ENCODE measurements at regions of chr10 and their contacts with region 1.

Region 1: GRCh38 chr10:17062955-17063484 is 66.6 kb downstream of the CUBN start:
- DNase-seq: peak; percentile 94
- H3K4me3 ChIP-seq: peak overlapping the region in 2 of 3 experiments; percentile 10 to 24
- H3K27ac ChIP-seq: peak overlapping the region; percentile 99
- H3K4me1 ChIP-seq: peaks cover 43% of the 10 kb centered on the region
- H3K27me3 ChIP-seq: no peaks in the 10 kb centered on the region
- CTCF ChIP-seq: no peak

Region 2: DNA sequence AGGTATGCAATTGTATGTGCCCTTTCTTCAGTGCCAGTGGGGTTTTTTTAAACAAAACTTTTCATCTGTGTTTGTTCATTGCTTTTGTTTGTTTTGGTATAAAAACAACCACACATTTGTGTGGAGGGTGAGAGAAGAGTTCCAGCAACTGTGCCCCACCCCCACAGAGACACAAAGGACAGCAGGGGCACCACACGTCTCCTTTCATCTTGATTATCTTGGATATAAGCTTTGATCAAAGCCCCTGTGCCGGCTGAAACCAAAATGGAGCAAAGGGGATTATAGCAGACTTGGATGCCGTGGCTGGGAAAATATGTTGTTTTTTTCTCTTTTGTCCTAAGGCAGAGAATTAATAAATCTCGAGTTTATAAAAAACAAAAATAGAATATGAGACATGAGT is 134.0 kb before region 1 on chr10:
- CTCF ChIA-PET with region 1: no interaction called
- dilution Hi-C with region 1: no loop called
- in situ Hi-C with region 1: no loop called
- intact Hi-C with region 1: no loop called
- DNase-seq: no peak
- H3K4me3 ChIP-seq: no peak overlapping the region
- H3K27ac ChIP-seq: no peak overlapping the region
- H3K4me1 ChIP-seq: peaks cover under 1% of the 10 kb centered on the region
- H3K27me3 ChIP-seq: no peaks in the 10 kb centered on the region
- CTCF ChIP-seq: no peak

Region 3: GRCh38 chr10:17023386-17024298 is 39.4 kb before region 1 on chr10:
- CTCF ChIA-PET with region 1: no interaction called
- dilution Hi-C with region 1: no loop called
- in situ Hi-C with region 1: no loop called
- intact Hi-C with region 1: loop called (anchors 2 kb)
- DNase-seq: peak; percentile 97
- H3K4me3 ChIP-seq: no peak overlapping the region
- H3K27ac ChIP-seq: peak overlapping the region; percentile 89
- H3K4me1 ChIP-seq: peaks cover 37% of the 10 kb centered on the region
- H3K27me3 ChIP-seq: no peaks in the 10 kb centered on the region
- CTCF ChIP-seq: no peak

Region 4: DNA sequence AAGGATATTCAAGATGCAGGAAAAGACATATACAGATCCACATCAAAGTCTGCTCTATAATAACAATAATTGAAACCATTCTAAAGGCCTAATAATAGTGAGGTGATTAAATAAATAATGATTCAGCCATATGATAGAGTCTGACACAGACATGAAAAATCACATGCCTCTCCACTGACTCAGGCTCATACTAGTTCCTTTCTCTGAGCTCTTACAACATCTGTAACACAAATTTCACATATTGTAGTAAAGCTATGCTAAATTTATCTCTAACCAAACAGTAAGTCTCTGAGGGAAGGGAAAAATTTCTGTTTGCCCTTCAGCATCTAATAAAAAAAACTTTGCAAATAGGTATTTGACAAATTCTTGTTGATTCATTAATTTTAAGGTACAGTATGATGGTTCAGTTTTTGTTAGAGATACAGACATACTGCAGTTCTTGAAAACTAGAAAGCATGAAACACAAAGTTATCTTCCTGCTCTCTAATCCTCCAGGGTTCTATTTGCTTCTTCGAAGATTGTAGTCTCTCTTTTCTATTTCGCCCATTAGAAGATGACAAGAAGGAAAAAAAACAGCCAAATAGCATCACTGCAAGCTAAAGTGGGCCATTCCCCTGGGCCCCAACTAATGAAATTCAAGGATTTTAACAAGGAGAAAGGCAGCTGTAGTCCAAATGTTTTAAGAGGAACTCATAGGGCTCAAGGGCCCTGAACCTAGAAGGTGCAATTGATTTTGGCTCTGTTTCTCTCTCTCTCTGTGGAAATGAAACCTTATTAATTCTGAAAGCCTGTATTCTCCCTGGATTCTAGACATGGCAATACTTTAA is 12.7 kb after region 1 on chr10:
- CTCF ChIA-PET with region 1: no interaction called
- dilution Hi-C with region 1: no loop called
- in situ Hi-C with region 1: no loop called
- intact Hi-C with region 1: loop called (anchors 1 kb)
- DNase-seq: peak; percentile 90
- H3K4me3 ChIP-seq: no peak overlapping the region
- H3K27ac ChIP-seq: peak overlapping the region; percentile 96
- H3K4me1 ChIP-seq: peaks cover 46% of the 10 kb centered on the region
- H3K27me3 ChIP-seq: no peaks in the 10 kb centered on the region
- CTCF ChIP-seq: no peak

Region 5: GRCh38 chr10:17115683-17116082 is 52.7 kb after region 1 on chr10:
- CTCF ChIA-PET with region 1: no interaction called
- dilution Hi-C with region 1: no loop called
- in situ Hi-C with region 1: no loop called
- intact Hi-C with region 1: no loop called
- DNase-seq: no peak
- H3K4me3 ChIP-seq: no peak overlapping the region
- H3K27ac ChIP-seq: no peak overlapping the region
- H3K4me1 ChIP-seq: peaks cover 22% of the 10 kb centered on the region
- H3K27me3 ChIP-seq: no peaks in the 10 kb centered on the region
- CTCF ChIP-seq: peak in 1 of 2 donors; percentile 1

Region 6: DNA sequence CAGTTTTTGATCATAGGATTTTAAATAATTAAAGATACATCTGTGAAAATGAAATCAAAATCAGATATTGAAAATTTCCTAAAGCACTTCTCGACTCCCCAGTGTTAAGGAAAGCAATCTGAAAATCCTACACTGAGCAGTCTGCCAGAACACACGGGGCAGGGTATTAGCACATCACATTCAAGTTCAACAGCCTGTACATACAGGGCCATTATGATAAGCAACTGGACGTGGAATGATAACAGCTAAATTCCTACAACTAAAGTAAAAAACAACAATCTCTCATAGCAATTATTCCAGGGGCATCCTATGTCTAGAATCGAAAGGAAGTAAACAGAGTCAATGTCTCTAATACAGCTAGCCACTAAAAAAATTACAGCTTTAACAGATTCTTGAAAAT is 106.8 kb after region 1 on chr10:
- CTCF ChIA-PET with region 1: no interaction called
- dilution Hi-C with region 1: no loop called
- in situ Hi-C with region 1: no loop called
- intact Hi-C with region 1: loop called (anchors 5 kb)
- DNase-seq: no peak
- H3K4me3 ChIP-seq: no peak overlapping the region
- H3K27ac ChIP-seq: no peak overlapping the region
- H3K4me1 ChIP-seq: no peaks in the 10 kb centered on the region
- H3K27me3 ChIP-seq: no peaks in the 10 kb centered on the region
- CTCF ChIP-seq: no peak

Measured in mammary epithelial cell (primary cell).